Activated naive CD4-positive, alpha-beta T cell treated with anti-CD3 and anti-CD28 coated beads for 36 hours (primary cell): ENCODE measurements at regions of chr11 and their contacts with region 1.

Region 1: GRCh38 chr11:102390667-102391465 is 43.9 kb downstream of the BIRC2 start:
- DNase-seq: peak; percentile 72
- H3K4me3 Mint-ChIP-seq: no peak overlapping the region
- H3K27ac Mint-ChIP-seq: peak overlapping the region; percentile 29
- H3K4me1 Mint-ChIP-seq: peaks cover 40% of the 10 kb centered on the region
- H3K27me3 Mint-ChIP-seq: no peaks in the 10 kb centered on the region

Region 2: GRCh38 chr11:101974255-101974654 is 416.6 kb before region 1 on chr11:
- CTCF ChIA-PET with region 1: no interaction called
- intact Hi-C with region 1: no loop called
- DNase-seq: no peak
- H3K4me3 Mint-ChIP-seq: no peak overlapping the region
- H3K27ac Mint-ChIP-seq: no peak overlapping the region
- H3K4me1 Mint-ChIP-seq: no peaks in the 10 kb centered on the region
- H3K27me3 Mint-ChIP-seq: no peaks in the 10 kb centered on the region

Region 3: GRCh38 chr11:102361086-102362031 is 29.5 kb before region 1 on chr11:
- CTCF ChIA-PET with region 1: interaction called, 17 read pairs
- intact Hi-C with region 1: no loop called
- DNase-seq: peak; percentile 44
- H3K4me3 Mint-ChIP-seq: peak overlapping the region; percentile 49
- H3K27ac Mint-ChIP-seq: peak overlapping the region; percentile 79
- H3K4me1 Mint-ChIP-seq: peaks cover 54% of the 10 kb centered on the region
- H3K27me3 Mint-ChIP-seq: no peaks in the 10 kb centered on the region

Region 4: DNA sequence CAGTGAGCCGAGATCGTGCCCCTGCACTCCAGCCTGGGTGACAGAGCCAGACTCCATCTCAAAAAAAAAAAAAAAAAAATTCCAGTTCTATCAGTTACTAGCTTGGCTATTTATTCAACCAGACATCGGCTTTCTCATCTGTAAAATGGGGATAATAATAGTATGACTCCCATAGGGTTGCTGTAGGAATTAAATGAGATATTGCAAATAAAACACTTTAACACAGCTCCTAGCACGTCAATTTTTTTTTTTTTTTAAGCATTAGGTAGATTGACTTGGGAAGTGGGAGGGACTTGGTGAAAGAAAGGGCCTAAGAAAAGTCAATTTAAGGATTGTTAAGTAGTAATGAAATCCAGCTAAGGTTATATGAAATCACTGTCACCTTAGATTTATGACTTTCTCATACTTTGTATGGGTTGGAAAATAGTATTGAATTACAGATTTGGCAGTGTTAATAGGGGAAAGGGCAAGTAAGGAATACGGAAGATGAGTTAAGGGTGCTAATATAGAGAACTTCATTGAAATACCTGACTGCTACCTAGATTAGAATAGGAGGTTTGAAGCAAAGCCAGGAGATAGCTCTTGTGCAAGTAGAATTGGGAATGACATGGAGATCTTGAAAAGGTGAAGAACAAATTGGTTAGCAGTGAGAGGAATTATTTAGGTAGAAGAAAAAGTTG is 15.0 kb before region 1 on chr11:
- CTCF ChIA-PET with region 1: interaction called, 34 read pairs
- intact Hi-C with region 1: no loop called
- DNase-seq: no peak
- H3K4me3 Mint-ChIP-seq: no peak overlapping the region
- H3K27ac Mint-ChIP-seq: no peak overlapping the region
- H3K4me1 Mint-ChIP-seq: peaks cover 28% of the 10 kb centered on the region
- H3K27me3 Mint-ChIP-seq: no peaks in the 10 kb centered on the region

Region 5: DNA sequence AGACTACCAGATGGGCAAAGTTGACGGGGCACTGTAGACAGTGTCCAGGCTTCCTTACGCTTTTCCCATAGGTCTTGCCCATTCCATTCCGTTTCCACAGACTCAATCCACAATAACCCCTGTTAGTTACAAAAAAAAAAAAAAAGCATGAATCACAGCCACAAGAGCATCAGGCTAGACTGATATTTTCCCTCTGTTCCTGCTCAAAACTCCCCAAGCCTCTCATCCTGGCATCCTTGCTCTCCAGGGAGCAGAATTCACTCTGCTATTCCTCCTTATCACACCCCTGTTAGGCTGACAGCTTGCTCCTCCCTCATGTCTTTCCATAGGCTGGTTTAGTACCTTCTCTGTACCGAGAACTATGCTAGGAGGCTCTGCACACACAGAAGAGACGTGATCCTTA is 19.5 kb after region 1 on chr11:
- CTCF ChIA-PET with region 1: interaction called, 41 read pairs
- intact Hi-C with region 1: no loop called
- DNase-seq: no peak
- H3K4me3 Mint-ChIP-seq: no peak overlapping the region
- H3K27ac Mint-ChIP-seq: no peak overlapping the region
- H3K4me1 Mint-ChIP-seq: peaks cover 86% of the 10 kb centered on the region
- H3K27me3 Mint-ChIP-seq: no peaks in the 10 kb centered on the region

Region 6: DNA sequence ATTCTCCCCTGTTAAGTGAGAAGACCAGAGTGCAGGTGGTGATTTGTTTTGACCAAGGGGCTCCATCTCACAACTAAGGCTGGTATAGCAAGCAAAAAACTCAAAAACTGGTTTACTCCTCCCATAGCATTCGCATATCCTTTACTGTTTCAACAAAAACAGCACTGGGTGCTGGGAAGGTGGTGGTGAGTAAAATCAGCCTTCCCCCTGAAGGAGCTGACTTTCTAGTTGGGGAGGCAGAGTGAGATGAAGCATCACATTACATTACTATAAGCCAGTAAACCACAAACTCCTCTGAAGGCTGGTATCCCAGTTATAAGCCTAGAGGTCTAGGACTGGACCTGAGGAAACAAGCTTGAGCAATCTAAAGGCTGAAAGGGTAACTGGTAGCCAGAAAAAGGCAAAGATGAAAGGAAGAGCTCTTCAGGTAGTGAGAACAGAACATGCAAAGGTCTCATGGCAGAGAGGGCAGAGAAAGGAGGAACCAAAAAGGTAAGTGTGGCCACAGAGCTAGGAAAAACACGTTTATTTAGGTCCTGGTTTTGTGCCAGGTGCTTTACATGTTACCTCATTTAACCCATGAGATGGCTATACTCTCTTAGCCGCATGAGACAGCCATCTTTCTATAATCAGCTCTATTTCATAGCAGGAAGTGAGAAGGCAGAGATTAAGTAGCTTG is 39.4 kb after region 1 on chr11:
- CTCF ChIA-PET with region 1: interaction called, 13 read pairs
- intact Hi-C with region 1: loop called (anchors 1 kb)
- DNase-seq: peak; percentile 86
- H3K4me3 Mint-ChIP-seq: peak overlapping the region; percentile 44
- H3K27ac Mint-ChIP-seq: peak overlapping the region; percentile 95
- H3K4me1 Mint-ChIP-seq: peaks cover 75% of the 10 kb centered on the region
- H3K27me3 Mint-ChIP-seq: no peaks in the 10 kb centered on the region

Region 7: GRCh38 chr11:102476812-102477211 is 85.9 kb after region 1 on chr11:
- CTCF ChIA-PET with region 1: interaction called, 10 read pairs
- intact Hi-C with region 1: no loop called
- DNase-seq: peak; percentile 61
- H3K4me3 Mint-ChIP-seq: peak overlapping the region; percentile 17
- H3K27ac Mint-ChIP-seq: peak overlapping the region; percentile 75
- H3K4me1 Mint-ChIP-seq: peaks cover 59% of the 10 kb centered on the region
- H3K27me3 Mint-ChIP-seq: no peaks in the 10 kb centered on the region

Region 8: DNA sequence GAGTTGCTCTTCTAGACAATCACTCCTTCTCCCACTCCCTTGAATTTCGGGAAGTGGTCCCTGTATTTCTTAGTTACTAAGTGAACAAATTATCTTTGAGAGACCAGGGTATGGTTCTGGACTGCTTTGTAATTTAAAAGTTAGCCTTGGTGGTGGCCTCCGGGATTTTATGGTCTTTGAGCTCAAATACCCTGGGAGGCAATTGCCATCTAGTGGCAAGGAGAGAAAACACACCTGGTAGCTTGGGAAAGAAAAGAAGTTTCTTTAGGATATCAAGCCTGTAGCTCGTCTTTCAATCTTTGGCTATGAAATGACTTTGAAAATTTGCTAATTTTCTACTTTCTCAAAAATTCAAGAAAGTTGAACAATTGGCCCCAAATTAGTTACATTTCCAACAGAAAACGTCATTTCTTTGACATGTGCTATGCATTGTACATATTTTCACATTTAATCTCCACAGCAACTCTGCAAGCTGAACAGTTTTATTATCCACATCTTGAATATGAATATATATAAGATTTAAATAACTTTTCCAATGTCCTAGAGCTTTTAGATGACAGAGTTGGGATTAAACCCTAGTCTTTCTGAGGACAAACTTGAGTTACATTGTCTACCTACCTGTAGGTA is 275.6 kb after region 1 on chr11:
- CTCF ChIA-PET with region 1: interaction called, 4 read pairs
- intact Hi-C with region 1: loop called (anchors 2 kb)
- DNase-seq: peak; percentile 28
- H3K4me3 Mint-ChIP-seq: no peak overlapping the region
- H3K27ac Mint-ChIP-seq: no peak overlapping the region
- H3K4me1 Mint-ChIP-seq: no peaks in the 10 kb centered on the region
- H3K27me3 Mint-ChIP-seq: no peaks in the 10 kb centered on the region

Region 9: GRCh38 chr11:102853956-102854355 is 463.1 kb after region 1 on chr11:
- CTCF ChIA-PET with region 1: no interaction called
- intact Hi-C with region 1: no loop called
- DNase-seq: no peak
- H3K4me3 Mint-ChIP-seq: no peak overlapping the region
- H3K27ac Mint-ChIP-seq: no peak overlapping the region
- H3K4me1 Mint-ChIP-seq: no peaks in the 10 kb centered on the region
- H3K27me3 Mint-ChIP-seq: no peaks in the 10 kb centered on the region